ENCODE measurements at regions of chr7 and their contacts with region 1.

Region 1: DNA sequence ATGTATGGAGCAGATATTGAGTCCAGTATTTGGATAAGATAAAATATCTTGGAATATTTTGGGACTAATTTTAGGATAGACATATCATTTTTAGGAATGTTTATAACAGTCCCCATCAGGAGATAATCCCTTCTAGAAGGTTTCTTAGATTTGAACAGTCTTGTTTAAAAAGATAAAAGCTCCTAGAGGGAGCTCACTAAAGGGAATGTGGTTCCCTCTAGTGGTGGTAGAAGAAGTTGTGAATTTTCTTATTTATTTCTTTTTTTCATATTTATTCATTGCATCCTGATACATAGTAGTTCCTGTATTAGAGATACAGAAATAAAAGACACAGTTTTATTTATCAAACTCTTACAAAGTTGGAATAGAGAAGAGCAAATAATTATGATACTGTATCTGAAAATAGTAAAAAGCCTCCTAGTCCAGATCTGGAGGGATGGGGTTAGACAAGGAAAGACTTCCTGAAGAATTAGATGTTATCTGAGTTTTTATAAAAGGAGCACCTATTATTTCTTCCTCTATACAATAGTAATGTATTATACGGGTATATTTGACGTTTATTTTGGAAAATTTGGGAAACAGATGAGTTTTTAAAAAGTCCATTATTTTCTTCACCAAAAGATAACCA is 24.5 kb upstream of the KLF14 start:
- ATAC-seq: peak in 6 of 8 experiments; percentile 39 to 49 (median 46)
- H3K4me3 ChIP-seq: no peak overlapping the region
- H3K27ac ChIP-seq: no peak overlapping the region
- H3K4me1 ChIP-seq: no peaks in the 10 kb centered on the region

Region 2: GRCh38 chr7:130069978-130070860 is 688.3 kb before region 1 on chr7 and contains the start of gene KLHDC10:
- in situ Hi-C with region 1: loop called in 6 of 9 experiments (anchors 25 kb)
- ATAC-seq: peak; percentile 95 to 98 (median 96)
- H3K4me3 ChIP-seq: peak within 1 kb of the TSS; percentile 73 to 83 (median 80)
- H3K27ac ChIP-seq: peak within 1 kb of the TSS; percentile 88 to 95
- H3K4me1 ChIP-seq: peaks cover 5 to 11% of the 10 kb centered on the region in 2 donors
- total RNA-seq, gene KLHDC10: 22.8 to 61.0 (median 40.5) TPM

Region 3: GRCh38 chr7:130084037-130084875 is 674.3 kb before region 1 on chr7:
- in situ Hi-C with region 1: loop called in 1 of 9 experiments (anchors 25 kb)
- ATAC-seq: no peak
- H3K4me3 ChIP-seq: no peak overlapping the region
- H3K27ac ChIP-seq: no peak overlapping the region
- H3K4me1 ChIP-seq: no peaks in the 10 kb centered on the region

Region 4: DNA sequence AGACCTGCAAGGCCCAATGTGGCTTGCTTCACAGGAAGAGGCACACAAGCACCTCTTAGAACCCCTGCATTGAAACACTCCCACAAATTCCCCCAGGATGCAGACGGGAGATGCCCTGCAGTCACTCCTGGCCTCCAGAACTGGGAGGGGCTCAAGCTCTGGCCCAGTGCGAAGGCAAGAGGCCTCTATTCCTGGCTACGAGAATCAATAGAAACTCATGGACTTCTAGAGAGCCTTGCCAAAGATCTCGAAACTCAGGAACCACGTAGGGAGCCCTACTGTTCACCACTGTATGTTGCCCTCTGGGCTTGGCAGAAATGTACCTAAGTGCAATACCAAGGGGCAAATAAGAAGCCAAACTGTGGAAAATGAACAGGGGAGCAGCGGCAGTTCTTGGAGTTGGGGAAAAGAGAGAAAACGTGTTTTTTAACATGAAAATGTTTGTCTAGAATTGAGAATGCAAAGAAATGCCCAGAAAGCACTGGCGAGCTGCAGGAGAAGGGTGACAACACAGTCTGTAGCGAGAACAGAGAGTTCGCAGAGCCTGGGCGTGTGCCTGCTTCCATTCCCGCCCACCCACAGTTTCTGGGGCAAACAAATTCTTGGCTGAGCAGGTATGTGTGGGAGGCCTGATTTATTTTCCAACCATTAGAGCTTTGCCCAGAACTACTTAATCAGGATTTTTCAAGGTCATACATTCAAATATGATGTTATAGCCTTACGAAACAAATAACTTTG is 236.0 kb after region 1 on chr7:
- in situ Hi-C with region 1: no loop called
- ATAC-seq: peak in 2 of 8 experiments; percentile 19 to 25
- H3K4me3 ChIP-seq: no peak overlapping the region
- H3K27ac ChIP-seq: no peak overlapping the region
- H3K4me1 ChIP-seq: no peaks in the 10 kb centered on the region

Measured in motor neuron (in vitro differentiated cells).